ENCODE measurements at regions of chr10 and their contacts with region 1.

Region 1: GRCh38 chr10:95864906-95865813 is 42.6 kb upstream of the CC2D2B start:
- DNase-seq: peak in 29 of 35 experiments; percentile 4 to 69 (median 13)
- ATAC-seq: peak; percentile 70 to 94 (median 84)
- H3K4me3 ChIP-seq: no peak overlapping the region
- H3K4me3 Mint-ChIP-seq: no peak overlapping the region
- H3K27ac ChIP-seq: no peak overlapping the region
- H3K27ac Mint-ChIP-seq: no peak overlapping the region
- H3K4me1 ChIP-seq: peaks cover 0 to 5% of the 10 kb centered on the region in 2 experiments
- H3K4me1 Mint-ChIP-seq: peaks cover 7 to 12% (median 10%) of the 10 kb centered on the region in 3 donors
- H3K27me3 ChIP-seq: no peaks in the 10 kb centered on the region
- H3K27me3 Mint-ChIP-seq: no peaks in the 10 kb centered on the region

Region 2: GRCh38 chr10:94725871-94726270 is 1139.3 kb before region 1 on chr10:
- CTCF ChIA-PET with region 1: no interaction called
- POLR2A ChIA-PET with region 1: no interaction called
- DNase-seq: no peak
- ATAC-seq: no peak
- H3K4me3 ChIP-seq: no peak overlapping the region
- H3K4me3 Mint-ChIP-seq: no peak overlapping the region
- H3K27ac ChIP-seq: no peak overlapping the region
- H3K27ac Mint-ChIP-seq: no peak overlapping the region
- H3K4me1 ChIP-seq: no peaks in the 10 kb centered on the region
- H3K4me1 Mint-ChIP-seq: no peaks in the 10 kb centered on the region
- H3K27me3 ChIP-seq: no peaks in the 10 kb centered on the region
- H3K27me3 Mint-ChIP-seq: peaks cover 0 to 3% of the 10 kb centered on the region in 2 donors

Region 3: GRCh38 chr10:95688648-95689047 is 176.5 kb before region 1 on chr10:
- CTCF ChIA-PET with region 1: interaction called, 13 to 58 read pairs
- POLR2A ChIA-PET with region 1: no interaction called
- DNase-seq: peak in 1 of 35 experiments; percentile 13
- ATAC-seq: no peak
- H3K4me3 ChIP-seq: no peak overlapping the region
- H3K4me3 Mint-ChIP-seq: no peak overlapping the region
- H3K27ac ChIP-seq: no peak overlapping the region
- H3K27ac Mint-ChIP-seq: no peak overlapping the region
- H3K4me1 ChIP-seq: peaks cover 3 to 17% of the 10 kb centered on the region in 2 experiments
- H3K4me1 Mint-ChIP-seq: peaks cover 36 to 47% (median 39%) of the 10 kb centered on the region in 3 donors
- H3K27me3 ChIP-seq: no peaks in the 10 kb centered on the region
- H3K27me3 Mint-ChIP-seq: no peaks in the 10 kb centered on the region

Region 4: GRCh38 chr10:95907456-95908253 is 42.5 kb after region 1 on chr10 and contains the start of gene CC2D2B:
- CTCF ChIA-PET with region 1: no interaction called
- POLR2A ChIA-PET with region 1: no interaction called
- DNase-seq: peak in 34 of 35 experiments; percentile 14 to 68 (median 38)
- ATAC-seq: peak; percentile 85 to 90 (median 89)
- H3K4me3 ChIP-seq: peak within 1 kb of the TSS; percentile 84 to 88
- H3K4me3 Mint-ChIP-seq: peak within 1 kb of the TSS; percentile 89 to 91 (median 89)
- H3K27ac ChIP-seq: peak within 1 kb of the TSS; percentile 69
- H3K27ac Mint-ChIP-seq: peak within 1 kb of the TSS; percentile 86 to 88
- H3K4me1 ChIP-seq: peaks cover 0 to 2% of the 10 kb centered on the region in 2 experiments
- H3K4me1 Mint-ChIP-seq: peaks cover 11 to 17% (median 16%) of the 10 kb centered on the region in 3 donors
- H3K27me3 ChIP-seq: no peaks in the 10 kb centered on the region
- H3K27me3 Mint-ChIP-seq: no peaks in the 10 kb centered on the region
- total RNA-seq, gene CC2D2B: 0.25 TPM in 1 of 5 donors, not detected in the others

Region 5: GRCh38 chr10:96188916-96189315 is 323.8 kb after region 1 on chr10:
- CTCF ChIA-PET with region 1: no interaction called
- POLR2A ChIA-PET with region 1: no interaction called
- DNase-seq: no peak
- ATAC-seq: no peak
- H3K4me3 ChIP-seq: no peak overlapping the region
- H3K4me3 Mint-ChIP-seq: no peak overlapping the region
- H3K27ac ChIP-seq: no peak overlapping the region
- H3K27ac Mint-ChIP-seq: no peak overlapping the region
- H3K4me1 ChIP-seq: no peaks in the 10 kb centered on the region
- H3K4me1 Mint-ChIP-seq: no peaks in the 10 kb centered on the region
- H3K27me3 ChIP-seq: peaks cover 0 to 8% of the 10 kb centered on the region in 2 experiments
- H3K27me3 Mint-ChIP-seq: peaks cover 22 to 23% of the 10 kb centered on the region in 2 donors

Region 6: DNA sequence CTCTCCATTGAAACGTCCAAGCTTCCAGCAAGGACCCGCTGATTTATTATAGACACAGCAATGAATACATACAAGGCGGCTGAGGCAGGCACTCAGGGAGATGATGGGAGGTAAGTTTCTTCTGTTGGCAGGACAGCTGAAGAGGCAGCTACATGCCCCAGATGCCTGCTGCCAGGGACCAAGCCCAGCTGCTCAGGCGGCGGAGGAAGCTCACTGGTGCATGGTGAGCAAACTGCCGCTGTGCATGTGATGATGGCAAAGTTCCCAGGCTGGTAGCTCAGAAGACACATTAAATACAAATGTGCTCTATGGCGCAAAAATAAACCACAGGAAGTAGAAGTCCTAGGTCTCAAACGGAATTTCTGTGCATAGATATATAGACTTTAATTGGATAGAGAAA is 441.4 kb after region 1 on chr10:
- CTCF ChIA-PET with region 1: no interaction called
- POLR2A ChIA-PET with region 1: no interaction called
- DNase-seq: peak in 26 of 35 experiments; percentile 0 to 44 (median 13)
- ATAC-seq: peak; percentile 63 to 84 (median 78)
- H3K4me3 ChIP-seq: no peak overlapping the region
- H3K4me3 Mint-ChIP-seq: peak overlapping the region in 2 of 3 donors; percentile 11 to 64
- H3K27ac ChIP-seq: no peak overlapping the region
- H3K27ac Mint-ChIP-seq: peak overlapping the region in 1 of 2 donors; percentile 74
- H3K4me1 ChIP-seq: no peaks in the 10 kb centered on the region
- H3K4me1 Mint-ChIP-seq: peaks cover 20 to 36% (median 23%) of the 10 kb centered on the region in 3 donors
- H3K27me3 ChIP-seq: peaks cover 0 to 9% of the 10 kb centered on the region in 2 experiments
- H3K27me3 Mint-ChIP-seq: peaks cover 3 to 44% of the 10 kb centered on the region in 2 donors

Measured in T-cell (primary cell).